ENCODE measurements at regions of chr10 and their contacts with region 1.

Region 1: DNA sequence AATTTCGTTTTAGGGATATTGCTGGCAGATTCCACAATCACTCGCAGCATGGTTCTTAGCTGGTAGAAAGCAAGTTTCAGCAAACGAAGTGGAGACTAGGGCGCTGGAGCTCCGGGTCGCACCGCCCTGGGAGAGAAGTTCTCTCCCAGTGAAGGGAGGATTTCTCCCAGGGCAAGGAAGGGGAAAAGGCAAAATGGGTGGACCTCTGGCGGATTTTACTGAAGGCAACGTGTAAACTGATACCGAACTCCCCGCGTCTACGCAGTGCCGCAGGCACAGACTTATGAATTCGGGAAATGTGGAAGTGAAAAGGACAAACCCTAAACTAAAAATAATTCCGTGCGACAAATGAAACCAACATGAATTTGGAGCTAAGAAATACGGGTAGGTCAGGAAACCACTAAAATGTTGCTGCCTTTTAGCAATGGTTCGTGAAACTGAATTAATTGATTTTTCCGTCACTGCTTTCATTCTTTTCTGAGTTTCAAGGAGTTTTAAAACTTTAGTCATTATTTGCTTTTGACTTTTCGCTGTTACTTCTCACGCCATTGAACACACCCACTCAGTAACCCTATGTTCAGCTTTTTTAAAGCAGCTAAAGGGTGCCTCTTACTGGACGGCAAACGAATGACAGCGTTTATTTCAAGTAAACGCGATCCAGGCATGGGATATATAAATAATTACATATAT is at the start of gene MYOF:
- DNase-seq: peak; percentile 80
- ATAC-seq: peak; percentile 90
- H3K4me3 ChIP-seq: peak within 1 kb of the TSS; percentile 54
- H3K27ac ChIP-seq: peak within 1 kb of the TSS; percentile 89
- H3K4me1 ChIP-seq: peaks cover 19% of the 10 kb centered on the region
- H3K27me3 ChIP-seq: no peaks in the 10 kb centered on the region
- CTCF ChIP-seq: peak; percentile 61
- total RNA-seq, gene MYOF: 132 TPM

Region 2: DNA sequence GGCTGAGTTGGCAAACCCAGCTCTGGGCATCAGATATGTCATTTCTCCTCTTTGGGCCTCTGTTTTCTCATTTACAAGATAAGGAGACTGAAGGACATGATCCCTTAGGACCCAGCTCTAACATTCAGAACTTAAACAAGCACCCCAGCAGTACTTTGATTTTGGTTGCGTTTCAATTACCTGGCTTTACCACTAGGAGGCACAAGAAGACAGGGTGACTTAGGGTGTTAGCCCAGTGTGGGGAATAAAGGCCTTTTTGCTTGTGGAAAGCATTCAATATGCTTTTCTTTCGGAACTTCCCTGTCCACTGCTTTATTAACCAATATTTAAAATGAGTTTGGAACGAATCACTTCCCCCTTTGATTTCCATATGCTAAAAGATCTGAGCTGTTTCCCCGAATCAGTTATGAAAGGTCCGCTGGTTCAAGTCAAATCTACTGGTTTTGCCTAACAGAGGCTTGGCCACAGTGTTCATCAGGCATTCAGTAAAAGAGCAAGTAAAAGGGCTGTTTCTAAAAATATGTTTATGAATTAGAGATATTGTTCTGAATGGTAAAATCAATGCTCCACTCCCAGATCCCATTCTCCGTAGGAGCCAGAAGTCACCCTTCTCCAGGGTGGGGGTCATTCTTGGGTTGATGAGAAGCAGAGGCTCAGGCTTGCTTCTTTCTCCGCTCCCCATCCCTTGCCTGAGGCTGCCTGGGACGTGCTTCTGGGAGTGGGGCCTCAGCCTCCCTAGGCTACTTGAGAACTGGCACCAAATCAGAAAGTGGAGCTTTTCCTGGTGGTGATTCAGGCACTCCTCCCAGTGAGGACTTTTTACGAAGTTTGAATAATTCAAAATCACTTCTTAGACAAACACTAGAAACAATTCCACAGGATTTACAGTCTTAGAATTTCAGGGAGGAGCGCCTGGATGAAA is 105.7 kb before region 1 on chr10:
- intact Hi-C with region 1: loop called (anchors 2 kb)
- DNase-seq: peak; percentile 65
- ATAC-seq: peak; percentile 95
- H3K4me3 ChIP-seq: no peak overlapping the region
- H3K27ac ChIP-seq: peak overlapping the region; percentile 56
- H3K4me1 ChIP-seq: peaks cover 9% of the 10 kb centered on the region
- H3K27me3 ChIP-seq: no peaks in the 10 kb centered on the region
- CTCF ChIP-seq: peak; percentile 96